Heart left ventricle (tissue), 16 donors: ENCODE measurements at regions of chr1 and their contacts with region 1.

Region 1: DNA sequence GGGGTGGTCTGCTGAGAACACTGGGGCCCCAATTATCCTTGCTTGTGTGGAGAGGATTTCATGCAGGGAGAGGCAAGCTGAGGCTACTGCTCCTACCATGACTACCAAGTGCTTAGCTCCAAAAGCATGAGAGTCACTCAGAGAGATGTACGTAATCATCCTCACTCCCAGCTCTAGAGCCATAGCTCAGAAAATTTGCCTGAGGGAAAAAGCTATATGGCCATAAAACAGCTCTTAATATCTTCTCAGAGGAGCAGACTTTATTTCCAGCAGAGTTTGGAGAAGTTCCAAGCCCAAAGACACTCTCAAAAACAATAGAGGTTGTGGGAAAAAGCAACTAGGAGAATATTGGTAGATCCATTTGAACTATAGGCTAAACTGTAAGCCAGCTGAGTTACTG is 106.4 kb upstream of the PBX1 start:
- DNase-seq: no peak
- ATAC-seq: no peak
- H3K4me3 ChIP-seq: no peak overlapping the region
- H3K27ac ChIP-seq: no peak overlapping the region
- H3K4me1 ChIP-seq: no peaks in the 10 kb centered on the region
- H3K27me3 ChIP-seq: no peaks in the 10 kb centered on the region
- CTCF ChIP-seq: no peak
- POLR2A ChIP-seq: no peak

Region 2: DNA sequence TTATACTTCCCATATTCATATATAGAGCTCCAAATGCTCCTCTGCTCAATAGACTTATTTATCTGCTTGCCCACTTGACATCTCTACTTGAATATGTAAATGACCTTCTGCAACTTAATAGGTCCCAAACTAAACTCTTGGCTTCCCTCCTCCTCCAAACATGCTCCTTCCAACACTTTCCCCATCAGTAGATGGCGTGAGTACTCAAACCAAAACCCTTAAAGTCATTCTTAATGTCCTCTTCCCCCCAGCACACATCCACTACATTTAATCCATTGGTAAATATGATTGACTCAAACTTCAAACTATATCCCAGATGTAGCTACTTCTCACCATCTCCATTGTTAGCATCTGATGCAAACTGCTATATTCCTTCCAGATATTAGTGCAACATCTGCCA is 57.9 kb after region 1 on chr1:
- intact Hi-C with region 1: loop called in 1 of 10 experiments (anchors 10 kb)
- DNase-seq: no peak
- ATAC-seq: no peak
- H3K4me3 ChIP-seq: no peak overlapping the region
- H3K27ac ChIP-seq: no peak overlapping the region
- H3K4me1 ChIP-seq: peaks cover 0 to 6% (median 0%) of the 10 kb centered on the region in 12 donors
- H3K27me3 ChIP-seq: no peaks in the 10 kb centered on the region
- CTCF ChIP-seq: peak in 3 of 12 donors; percentile 14 to 38 (median 18)
- POLR2A ChIP-seq: no peak